HepG2 (cell line): ENCODE measurements at regions of chr3 and their contacts with region 1.

Region 1: DNA sequence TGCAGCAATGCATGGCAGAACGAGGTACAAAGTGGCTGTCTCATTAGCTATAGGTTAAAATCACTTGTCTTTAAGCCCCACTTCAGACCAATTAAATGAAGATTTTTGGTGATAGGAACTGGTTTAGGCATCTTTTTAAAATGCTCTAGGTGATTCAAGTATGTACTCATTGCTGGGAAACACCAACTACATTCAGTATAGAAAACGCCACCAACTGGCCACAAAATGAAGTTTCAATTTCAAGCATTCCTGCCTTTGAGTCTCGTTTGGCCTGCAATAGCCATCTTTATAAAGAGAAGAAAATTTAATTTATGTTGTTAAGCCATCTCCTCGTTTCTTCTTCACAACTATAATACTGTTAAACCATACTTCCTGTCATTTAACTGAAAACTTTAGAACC is 587.9 kb downstream of the GBE1 start:
- DNase-seq: peak; percentile 10
- ATAC-seq: peak; percentile 64; the same call in 2 of the 3 replicates
- H3K4me3 ChIP-seq: no peak overlapping the region
- H3K27ac ChIP-seq: no peak overlapping the region
- H3K4me1 ChIP-seq: no peaks in the 10 kb centered on the region
- H3K27me3 ChIP-seq: no peaks in the 10 kb centered on the region
- CTCF ChIP-seq: peak; percentile 36; the same call in 1 of the 2 replicates
- EP300 ChIP-seq: no peak
- POLR2A ChIP-seq: no peak
- RAD21 ChIP-seq: no peak

Region 2: GRCh38 chr3:80785470-80785869 is 388.0 kb before region 1 on chr3:
- CTCF ChIA-PET with region 1: interaction called, 8 read pairs
- POLR2A ChIA-PET with region 1: no interaction called
- in situ Hi-C with region 1: no loop called
- intact Hi-C with region 1: loop called (anchors 1 kb)
- DNase-seq: peak; percentile 6
- ATAC-seq: peak; percentile 47; the same call in 2 of the 3 replicates
- H3K4me3 ChIP-seq: no peak overlapping the region
- H3K27ac ChIP-seq: no peak overlapping the region
- H3K4me1 ChIP-seq: no peaks in the 10 kb centered on the region
- H3K27me3 ChIP-seq: no peaks in the 10 kb centered on the region
- CTCF ChIP-seq: peak; percentile 48
- EP300 ChIP-seq: no peak
- POLR2A ChIP-seq: no peak
- RAD21 ChIP-seq: no peak